ENCODE measurements at regions of chr2 and their contacts with region 1.

Region 1: DNA sequence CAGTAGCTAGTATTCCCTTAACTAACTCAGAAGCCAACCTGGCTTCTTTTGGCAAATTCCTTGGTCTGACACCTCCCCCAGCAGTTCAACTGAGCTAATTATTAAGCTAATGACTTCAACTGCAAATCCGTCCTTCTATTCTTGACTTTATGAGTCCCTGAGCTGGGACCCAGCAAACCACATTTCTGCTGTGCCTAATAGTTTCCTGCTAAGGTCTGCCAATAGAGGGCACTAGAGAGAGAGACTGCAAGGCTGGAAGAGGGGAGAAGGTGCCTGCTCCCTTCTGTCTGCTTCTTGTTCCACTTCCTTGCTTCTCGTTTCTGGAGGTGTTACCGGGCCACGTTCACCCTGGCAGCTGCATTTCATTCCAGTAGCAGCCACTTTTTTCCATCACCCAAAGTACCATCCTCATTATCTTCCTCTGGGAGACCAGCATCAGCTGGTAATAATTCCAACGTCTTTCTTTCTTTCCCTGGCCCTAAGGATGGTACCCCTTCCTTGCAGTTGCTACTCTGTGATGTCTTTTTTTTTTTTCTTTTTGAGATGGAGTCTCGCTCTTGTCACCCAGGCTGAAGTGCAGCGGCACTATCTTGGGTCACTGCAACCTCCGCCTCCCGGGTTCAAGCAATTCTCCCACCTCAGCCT is 352.0 kb downstream of the TNS1 start:
- DNase-seq: peak; percentile 40 to 76 (median 73)
- H3K4me3 ChIP-seq: no peak overlapping the region
- H3K27ac ChIP-seq: no peak overlapping the region
- H3K4me1 ChIP-seq: no peaks in the 10 kb centered on the region
- H3K27me3 ChIP-seq: peaks cover 0 to 4% (median 0%) of the 10 kb centered on the region in 5 experiments

Region 2: DNA sequence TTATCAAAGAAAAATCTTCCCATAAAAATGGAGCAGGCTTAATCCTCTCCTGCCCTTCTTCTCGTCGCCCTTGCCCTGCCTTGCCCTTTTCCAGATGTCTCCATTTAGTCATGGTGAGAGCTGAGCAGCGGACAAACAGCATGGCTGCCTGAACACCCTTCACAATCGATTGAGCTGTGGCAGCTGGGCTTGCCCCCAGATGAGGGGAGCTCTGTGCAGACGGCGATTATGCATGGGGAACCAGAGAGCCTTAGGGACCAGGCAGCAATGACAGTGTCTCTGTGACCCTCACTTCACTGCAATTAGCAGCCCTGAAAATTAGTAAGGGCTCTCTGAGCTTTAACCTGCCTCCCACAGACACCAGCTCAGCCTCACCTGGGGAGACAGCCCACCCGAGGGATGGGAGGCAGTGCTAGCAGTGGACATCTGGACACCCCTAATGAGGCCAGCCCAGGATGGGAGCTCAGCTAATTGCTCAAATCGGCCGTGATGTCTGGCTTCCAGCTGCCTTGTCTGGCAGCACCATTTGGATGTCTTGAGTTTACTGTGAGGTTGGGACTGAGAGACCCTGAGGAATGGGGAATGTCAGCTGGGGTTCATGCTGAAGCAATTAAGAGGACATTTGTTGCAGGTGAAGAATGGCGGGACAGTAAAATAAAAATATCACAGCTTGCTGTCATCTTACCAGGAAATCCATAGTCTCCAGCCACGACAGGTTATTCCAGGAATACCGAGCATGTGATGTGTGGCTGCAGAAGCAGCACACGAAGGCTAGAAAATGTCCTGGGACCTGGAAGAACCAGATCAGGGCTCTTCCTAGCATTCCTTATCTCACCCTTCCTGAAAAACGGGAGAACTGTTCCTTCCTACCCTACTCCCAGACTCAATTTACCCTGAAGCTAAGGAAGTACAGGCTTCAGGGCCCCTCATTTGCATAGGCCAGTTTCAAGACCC is 13.6 kb before region 1 on chr2:
- CTCF ChIA-PET with region 1: interaction called, 19 read pairs
- POLR2A ChIA-PET with region 1: no interaction called
- DNase-seq: no peak
- H3K4me3 ChIP-seq: no peak overlapping the region
- H3K27ac ChIP-seq: no peak overlapping the region
- H3K4me1 ChIP-seq: no peaks in the 10 kb centered on the region
- H3K27me3 ChIP-seq: peaks cover 0 to 4% (median 0%) of the 10 kb centered on the region in 5 experiments

Region 3: DNA sequence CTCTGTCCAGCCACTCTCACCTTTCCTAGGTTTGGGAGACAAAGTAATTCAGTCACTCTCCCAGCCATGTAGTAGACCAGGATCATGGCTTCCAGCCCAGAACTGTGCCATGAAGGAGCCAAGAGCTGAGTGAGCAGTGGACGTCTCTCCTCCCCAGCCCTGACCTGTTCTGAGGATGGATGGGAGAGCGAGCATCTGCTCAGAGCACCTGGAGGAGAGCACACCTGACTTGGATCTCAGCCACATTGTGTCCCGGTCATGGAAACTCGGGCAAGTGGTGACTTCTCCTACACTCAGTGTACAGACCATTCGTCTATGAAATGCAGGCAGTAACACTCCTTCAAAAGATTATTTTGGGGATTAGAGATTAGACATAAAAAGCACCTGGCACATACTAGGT is 52.3 kb after region 1 on chr2:
- CTCF ChIA-PET with region 1: no interaction called
- POLR2A ChIA-PET with region 1: no interaction called
- DNase-seq: no peak
- H3K4me3 ChIP-seq: no peak overlapping the region
- H3K27ac ChIP-seq: no peak overlapping the region
- H3K4me1 ChIP-seq: no peaks in the 10 kb centered on the region
- H3K27me3 ChIP-seq: peaks cover 0 to 5% (median 4%) of the 10 kb centered on the region in 5 experiments

Measured in common myeloid progenitor, CD34-positive (primary cell).